PC-9 (cell line): ENCODE measurements at regions of chr3 and their contacts with region 1.

Region 1: GRCh38 chr3:32157600-32158264 is 51.3 kb downstream of the GPD1L start:
- DNase-seq: no peak
- H3K4me3 ChIP-seq: no peak overlapping the region
- H3K27ac ChIP-seq: no peak overlapping the region
- H3K4me1 ChIP-seq: no peaks in the 10 kb centered on the region
- H3K27me3 ChIP-seq: no peaks in the 10 kb centered on the region
- CTCF ChIP-seq: no peak

Region 2: DNA sequence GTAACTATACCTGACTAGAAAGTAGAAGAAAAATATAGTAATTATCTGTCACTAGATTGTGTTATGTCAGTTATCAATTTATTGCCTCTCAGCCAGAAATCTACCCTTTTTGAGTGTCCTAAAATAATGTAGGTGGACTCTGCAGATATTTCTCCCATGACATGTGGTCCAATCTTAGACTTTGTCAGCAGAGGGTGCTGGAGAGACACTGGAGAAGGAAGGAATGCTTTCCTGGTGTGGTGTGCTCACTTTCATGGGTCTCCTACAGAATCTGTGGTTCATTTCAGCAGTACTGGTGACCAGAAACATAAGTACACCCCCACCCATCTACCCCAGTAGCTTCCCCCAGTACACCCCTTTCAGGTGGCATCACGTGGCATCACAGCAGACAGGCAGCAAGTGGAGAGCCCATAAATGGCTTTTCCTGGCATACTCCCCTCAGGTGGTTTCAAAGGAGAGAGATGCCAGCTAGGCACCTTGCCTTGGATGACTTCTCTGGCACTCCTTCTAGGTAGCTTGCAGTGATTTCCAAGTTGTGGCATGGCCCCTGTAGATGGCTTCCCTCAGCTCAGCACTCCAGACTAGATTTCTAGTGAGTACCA is 1377.9 kb before region 1 on chr3:
- CTCF ChIA-PET with region 1: no interaction called
- POLR2A ChIA-PET with region 1: no interaction called
- intact Hi-C with region 1: loop called (anchors 5 kb)
- DNase-seq: no peak
- H3K4me3 ChIP-seq: no peak overlapping the region
- H3K27ac ChIP-seq: no peak overlapping the region
- H3K4me1 ChIP-seq: 0 out of 2 replicates have a peak, but pooled peaks cover 6% of the 10 kb centered on the region
- H3K27me3 ChIP-seq: no peaks in the 10 kb centered on the region
- CTCF ChIP-seq: peak; percentile 40; the same call in 1 of the 2 replicates

Region 3: GRCh38 chr3:32194653-32195052 is 36.9 kb after region 1 on chr3:
- CTCF ChIA-PET with region 1: no interaction called
- POLR2A ChIA-PET with region 1: no interaction called
- intact Hi-C with region 1: no loop called
- DNase-seq: no peak
- H3K4me3 ChIP-seq: no peak overlapping the region
- H3K27ac ChIP-seq: no peak overlapping the region
- H3K4me1 ChIP-seq: no peaks in the 10 kb centered on the region
- H3K27me3 ChIP-seq: no peaks in the 10 kb centered on the region
- CTCF ChIP-seq: no peak

Region 4: DNA sequence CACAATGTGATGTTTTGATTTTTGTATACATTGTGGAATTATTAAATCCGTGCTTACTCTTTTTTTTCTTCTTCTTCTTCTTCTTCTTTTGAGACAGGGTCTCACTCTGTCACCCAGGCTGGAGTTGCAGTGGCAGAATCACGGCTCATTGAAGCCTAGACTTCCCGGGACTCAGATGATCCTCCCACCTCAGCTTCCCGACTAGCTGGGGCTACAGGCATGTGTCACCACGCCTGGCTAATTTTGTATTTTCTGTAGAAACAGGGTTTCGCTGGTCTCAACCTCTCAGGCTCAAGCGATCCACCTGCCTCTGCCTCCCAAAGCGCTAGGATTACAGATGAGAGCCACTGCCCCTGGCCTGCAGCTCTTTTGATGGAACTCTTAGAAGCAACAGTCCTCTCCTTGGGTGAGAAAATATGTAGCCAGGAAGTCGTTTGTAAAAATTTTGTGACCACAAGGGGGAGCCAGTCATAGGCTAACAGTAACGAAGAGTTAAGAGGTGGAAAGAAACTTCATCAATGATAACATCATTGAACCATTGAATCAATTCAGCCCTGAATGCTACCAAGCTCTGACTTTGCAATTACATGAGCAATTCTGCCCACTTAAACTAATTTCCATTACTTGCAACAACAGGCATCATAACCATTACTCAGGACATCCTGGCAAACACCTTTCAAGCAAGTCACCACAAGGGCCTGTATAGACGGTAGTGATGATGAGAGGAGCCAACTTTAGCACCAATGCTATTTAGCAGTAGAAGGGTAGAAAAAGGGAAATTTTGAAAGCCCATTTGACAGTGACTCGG is 217.3 kb after region 1 on chr3:
- CTCF ChIA-PET with region 1: no interaction called
- POLR2A ChIA-PET with region 1: no interaction called
- intact Hi-C with region 1: no loop called
- DNase-seq: peak in 1 of 2 experiments; percentile 44
- H3K4me3 ChIP-seq: no peak overlapping the region
- H3K27ac ChIP-seq: no peak overlapping the region
- H3K4me1 ChIP-seq: no peaks in the 10 kb centered on the region
- H3K27me3 ChIP-seq: no peaks in the 10 kb centered on the region
- CTCF ChIP-seq: peak; percentile 67